ENCODE measurements at regions of chr15 and their contacts with region 1.

Region 1: DNA sequence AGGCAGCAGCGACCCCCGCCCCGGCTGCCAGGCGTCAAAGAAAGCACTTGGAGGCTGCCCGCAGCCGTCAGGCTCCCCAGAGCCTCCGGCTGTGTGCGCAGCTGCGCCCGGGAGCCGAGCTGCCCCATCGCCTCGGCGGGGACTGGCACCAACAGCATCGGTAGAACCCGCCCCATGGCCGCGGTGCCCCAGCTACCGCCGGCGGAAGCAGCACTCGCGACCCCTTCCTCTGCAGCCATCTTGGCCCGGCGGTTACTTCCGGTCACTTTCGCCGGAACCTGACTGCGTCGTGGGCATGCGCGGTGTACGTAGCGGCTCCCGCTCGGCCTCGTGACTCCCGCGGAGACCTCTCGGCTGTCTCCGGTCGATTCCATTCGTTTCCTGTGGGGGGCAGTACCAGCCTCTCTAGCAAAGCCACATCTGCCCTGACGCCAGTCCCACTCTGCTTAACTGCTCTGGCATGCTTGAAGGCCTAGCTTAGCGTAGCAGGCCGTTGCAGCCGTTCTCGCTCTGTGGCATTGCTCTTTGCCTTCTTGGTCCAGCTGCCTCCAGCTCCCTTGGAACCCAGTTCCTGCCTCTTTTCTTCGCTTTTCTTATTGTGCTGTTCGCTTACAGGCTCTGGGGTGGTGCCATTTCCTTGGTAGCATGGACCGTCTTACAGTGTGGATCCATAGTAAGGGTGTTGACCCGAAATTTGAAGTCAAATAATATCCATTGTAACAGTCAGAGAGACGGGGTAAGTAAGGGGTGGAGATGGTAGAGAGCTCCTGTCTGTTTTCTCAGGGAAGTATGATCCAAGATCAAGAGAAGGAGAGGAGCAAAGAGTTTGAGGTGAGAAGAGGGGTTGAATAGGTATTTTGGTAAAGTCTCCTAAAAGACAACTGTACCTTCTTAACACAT is at the start of gene SPG11:
- DNase-seq: peak; percentile 97 to 100
- H3K4me3 ChIP-seq: peak within 1 kb of the TSS; percentile 98
- CTCF ChIP-seq: peak in 1 of 3 donors; percentile 86
- POLR2A ChIP-seq: peak in 1 of 2 donors; percentile 85
- total RNA-seq, gene SPG11: 78.1 to 118 (median 89.7) TPM

Region 2: GRCh38 chr15:44574734-44575133 is 88.9 kb before region 1 on chr15:
- intact Hi-C with region 1: loop called (anchors 5 kb)
- DNase-seq: no peak
- H3K4me3 ChIP-seq: no peak overlapping the region
- CTCF ChIP-seq: no peak
- POLR2A ChIP-seq: no peak

Region 3: DNA sequence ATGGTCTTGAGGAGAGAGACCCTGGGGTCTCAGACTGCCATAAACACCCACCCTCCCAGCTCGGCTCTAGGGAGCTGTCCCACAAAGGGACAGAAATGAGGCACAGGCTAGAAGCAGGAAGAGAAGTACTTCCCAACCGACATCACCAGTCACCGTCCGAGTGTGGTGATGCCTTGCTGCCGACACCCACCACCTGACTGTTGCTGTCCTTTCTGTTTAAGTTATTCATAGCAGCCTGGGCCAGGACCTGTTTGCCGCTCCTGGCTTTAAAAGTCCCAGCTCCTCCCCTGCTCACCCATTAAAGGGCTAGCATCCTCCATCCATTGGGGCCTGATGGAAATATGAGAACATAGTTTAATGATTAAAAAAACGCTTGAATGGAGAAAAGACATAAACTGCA is 13.0 kb after region 1 on chr15:
- intact Hi-C with region 1: no loop called
- DNase-seq: no peak
- H3K4me3 ChIP-seq: no peak overlapping the region
- CTCF ChIP-seq: no peak
- POLR2A ChIP-seq: no peak

Region 4: GRCh38 chr15:44738340-44738984 is 74.8 kb after region 1 on chr15:
- intact Hi-C with region 1: loop called (anchors 5 kb)
- DNase-seq: no peak
- H3K4me3 ChIP-seq: no peak overlapping the region
- CTCF ChIP-seq: no peak
- POLR2A ChIP-seq: no peak

Measured in lower leg skin (tissue), 4 donors.